Endothelial cell of umbilical vein (primary cell): ENCODE measurements at regions of chr14 and their contacts with region 1.

Region 1: GRCh38 chr14:77320238-77320935 is at the start of gene POMT2:
- DNase-seq: peak; percentile 94
- H3K4me3 ChIP-seq: peak within 1 kb of the TSS; percentile 66 to 93 (median 76)
- H3K27ac ChIP-seq: peak within 1 kb of the TSS; percentile 94
- H3K4me1 ChIP-seq: peaks cover 17% of the 10 kb centered on the region
- H3K27me3 ChIP-seq: no peaks in the 10 kb centered on the region
- CTCF ChIP-seq: peak; percentile 33 to 44
- POLR2A ChIP-seq: no peak
- total RNA-seq, gene POMT2: 43.2 and 48.2 TPM in 2 replicates

Region 2: DNA sequence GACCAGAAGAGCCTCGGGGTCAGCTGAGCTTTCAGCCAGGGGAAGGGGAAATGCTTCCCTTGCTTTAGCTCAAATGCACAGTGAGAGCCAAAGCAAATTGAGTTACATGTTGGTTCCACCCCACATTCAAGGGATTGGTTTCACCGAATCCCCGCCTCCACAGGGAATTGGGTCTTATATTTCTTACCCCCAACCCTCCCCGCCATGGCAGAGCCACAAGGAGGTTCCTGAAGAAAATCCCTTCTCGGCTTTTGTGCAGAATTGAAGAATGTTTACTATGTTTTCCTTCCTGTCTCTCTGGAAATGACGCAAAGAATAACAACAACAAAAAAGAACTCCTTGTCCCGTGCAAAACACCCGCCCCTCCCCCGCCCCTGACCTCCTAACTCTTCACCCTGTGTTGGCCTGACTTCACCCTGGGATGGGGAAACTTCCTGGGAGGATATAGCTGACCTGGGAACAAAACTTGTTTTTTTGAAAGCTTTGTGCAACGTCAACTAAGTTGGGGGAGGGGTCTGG is 244.2 kb before region 1 on chr14:
- CTCF ChIA-PET with region 1: no interaction called
- POLR2A ChIA-PET with region 1: no interaction called
- dilution Hi-C with region 1: no loop called
- intact Hi-C with region 1: no loop called
- DNase-seq: peak; percentile 89
- H3K4me3 ChIP-seq: no peak overlapping the region
- H3K27ac ChIP-seq: peak overlapping the region; percentile 86
- H3K4me1 ChIP-seq: peaks cover 14% of the 10 kb centered on the region
- H3K27me3 ChIP-seq: no peaks in the 10 kb centered on the region
- CTCF ChIP-seq: no peak
- POLR2A ChIP-seq: no peak

Region 3: DNA sequence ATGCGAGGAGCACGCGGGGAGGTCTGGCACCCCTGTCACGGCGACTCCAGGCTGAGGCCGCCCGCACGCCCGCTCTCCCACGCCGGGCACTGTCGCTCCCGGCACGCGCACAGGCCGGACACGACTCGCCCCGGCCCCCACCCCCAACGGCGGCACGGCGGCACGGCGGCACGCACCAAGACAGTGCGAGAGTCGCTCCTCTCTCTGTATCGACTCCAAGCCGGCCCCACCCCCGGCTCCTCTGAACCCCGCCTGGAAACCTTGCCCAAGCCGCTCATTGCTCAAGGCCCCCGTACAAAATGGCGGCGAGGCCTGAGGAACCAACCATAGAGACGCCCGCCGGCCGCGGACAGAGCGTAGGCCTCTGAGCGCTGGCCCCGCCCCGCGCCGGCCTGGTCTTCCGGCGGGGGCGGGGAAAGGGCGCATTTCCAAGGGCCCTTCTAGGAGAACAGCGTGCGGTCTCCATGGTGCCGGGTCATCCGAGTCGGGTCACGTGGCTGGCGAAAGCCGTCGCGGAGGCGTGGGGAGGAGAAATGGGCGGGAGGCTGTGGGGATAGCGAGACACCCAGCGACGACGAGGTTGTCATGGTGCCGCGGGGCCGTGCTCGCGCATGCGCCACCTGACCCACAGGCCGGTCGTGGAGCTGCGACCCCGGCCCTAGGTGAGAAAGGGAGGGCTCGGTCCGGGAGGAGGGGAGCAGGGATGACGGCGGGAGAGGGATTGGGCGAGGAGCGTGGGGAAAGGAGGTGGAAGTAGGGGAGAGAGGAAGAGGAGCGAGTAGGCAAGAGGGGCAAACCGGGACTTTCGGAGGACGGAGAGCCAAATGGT is 222.5 kb before region 1 on chr14 and contains the start of gene CIPC:
- CTCF ChIA-PET with region 1: interaction called, 5 read pairs
- POLR2A ChIA-PET with region 1: no interaction called
- dilution Hi-C with region 1: no loop called
- intact Hi-C with region 1: loop called (anchors 1 kb)
- DNase-seq: peak; percentile 99
- H3K4me3 ChIP-seq: peak within 1 kb of the TSS; percentile 30 to 72 (median 66)
- H3K27ac ChIP-seq: peak within 1 kb of the TSS; percentile 57
- H3K4me1 ChIP-seq: peaks cover 27% of the 10 kb centered on the region
- H3K27me3 ChIP-seq: no peaks in the 10 kb centered on the region
- CTCF ChIP-seq: no peak
- POLR2A ChIP-seq: no peak
- total RNA-seq, gene CIPC: 17.4 and 17.7 TPM in 2 replicates

Region 4: DNA sequence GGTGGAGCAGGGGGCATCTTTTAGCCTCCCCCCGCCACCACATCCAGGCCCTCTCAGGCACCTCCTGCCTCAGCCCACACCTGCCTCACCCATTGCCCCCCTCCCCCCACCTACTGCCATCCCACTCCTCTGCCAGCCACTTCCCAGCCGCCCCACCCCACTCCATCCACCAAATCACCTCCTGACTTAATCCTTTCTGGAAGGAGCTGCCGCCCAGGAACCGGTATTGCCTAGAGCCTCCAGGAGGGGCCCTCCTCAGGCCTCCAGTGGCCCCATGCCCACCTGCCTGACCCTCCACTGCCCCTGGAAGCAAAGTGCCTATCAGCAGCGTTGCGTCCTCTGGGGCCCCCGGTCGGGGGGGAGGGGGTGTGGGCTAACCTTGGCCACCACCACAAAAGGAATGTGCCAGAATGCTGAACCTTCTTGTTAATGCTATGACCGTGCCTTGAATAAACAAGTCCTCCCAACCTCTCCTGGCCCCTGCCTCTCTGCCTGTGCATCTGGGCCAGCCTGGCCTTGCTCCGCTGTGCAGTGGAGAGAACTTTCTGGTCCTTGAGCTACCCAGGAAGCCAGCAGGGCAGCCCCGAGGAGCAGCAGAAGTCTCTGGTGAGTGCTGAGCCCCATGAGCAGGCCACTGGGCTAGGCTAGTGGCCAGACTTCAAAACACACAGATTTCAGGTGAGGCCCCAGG is 61.2 kb before region 1 on chr14:
- CTCF ChIA-PET with region 1: no interaction called
- POLR2A ChIA-PET with region 1: no interaction called
- dilution Hi-C with region 1: no loop called
- intact Hi-C with region 1: no loop called
- DNase-seq: no peak
- H3K4me3 ChIP-seq: no peak overlapping the region
- H3K27ac ChIP-seq: no peak overlapping the region
- H3K4me1 ChIP-seq: no peaks in the 10 kb centered on the region
- H3K27me3 ChIP-seq: no peaks in the 10 kb centered on the region
- CTCF ChIP-seq: no peak
- POLR2A ChIP-seq: no peak

Region 5: GRCh38 chr14:77301103-77301502 is 19.3 kb before region 1 on chr14:
- CTCF ChIA-PET with region 1: interaction called, 515 read pairs
- POLR2A ChIA-PET with region 1: interaction called, 7 read pairs
- dilution Hi-C with region 1: no loop called
- intact Hi-C with region 1: loop called (anchors 1 kb)
- DNase-seq: peak; percentile 74
- H3K4me3 ChIP-seq: no peak overlapping the region
- H3K27ac ChIP-seq: no peak overlapping the region
- H3K4me1 ChIP-seq: peaks cover 29% of the 10 kb centered on the region
- H3K27me3 ChIP-seq: no peaks in the 10 kb centered on the region
- CTCF ChIP-seq: peak; percentile 85
- POLR2A ChIP-seq: no peak

Region 6: DNA sequence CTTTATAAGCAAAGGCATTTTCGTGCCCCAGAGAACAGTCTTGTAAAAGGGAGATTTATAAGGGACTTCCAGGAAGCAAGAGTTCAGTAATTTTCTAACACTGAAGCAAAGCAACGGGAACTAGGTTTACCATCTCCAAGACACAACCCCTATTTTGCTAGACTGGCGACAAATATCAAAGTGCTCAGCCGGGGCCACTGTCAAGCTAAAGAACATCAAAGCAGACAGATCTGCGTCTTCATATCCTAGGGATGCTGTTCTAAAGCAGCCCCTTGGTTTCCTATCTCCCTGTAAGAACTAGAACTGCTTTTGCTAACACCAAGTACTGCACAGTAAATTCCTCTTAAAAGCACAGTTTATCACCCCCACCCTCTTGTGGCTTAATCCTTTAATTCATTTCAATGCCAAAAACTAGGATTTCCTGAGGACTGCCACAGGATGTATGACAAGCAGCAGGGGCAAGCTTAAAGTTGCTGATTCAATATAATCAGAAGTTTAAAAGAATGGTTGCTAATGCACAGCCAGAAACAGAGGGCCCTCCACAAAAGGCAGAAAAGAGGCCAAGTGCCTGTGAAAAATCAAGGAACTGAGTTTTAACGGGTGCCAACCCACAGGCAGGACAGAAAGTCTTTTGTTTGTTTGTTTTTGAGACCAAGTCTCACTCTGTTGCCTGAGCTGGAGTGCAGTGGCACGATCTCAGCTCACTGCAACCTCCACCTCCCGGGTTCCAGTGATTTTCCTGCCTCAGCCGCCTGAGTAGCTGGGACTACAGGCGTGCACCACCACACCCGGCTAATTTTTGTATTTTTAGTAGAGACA is 222.2 kb after region 1 on chr14:
- CTCF ChIA-PET with region 1: interaction called, 3 read pairs
- POLR2A ChIA-PET with region 1: no interaction called
- dilution Hi-C with region 1: no loop called
- intact Hi-C with region 1: loop called (anchors 2 kb)
- DNase-seq: peak; percentile 91
- H3K4me3 ChIP-seq: peak overlapping the region in 1 of 3 experiments; percentile 47
- H3K27ac ChIP-seq: peak overlapping the region; percentile 79
- H3K4me1 ChIP-seq: peaks cover 34% of the 10 kb centered on the region
- H3K27me3 ChIP-seq: no peaks in the 10 kb centered on the region
- CTCF ChIP-seq: no peak
- POLR2A ChIP-seq: no peak

Region 7: DNA sequence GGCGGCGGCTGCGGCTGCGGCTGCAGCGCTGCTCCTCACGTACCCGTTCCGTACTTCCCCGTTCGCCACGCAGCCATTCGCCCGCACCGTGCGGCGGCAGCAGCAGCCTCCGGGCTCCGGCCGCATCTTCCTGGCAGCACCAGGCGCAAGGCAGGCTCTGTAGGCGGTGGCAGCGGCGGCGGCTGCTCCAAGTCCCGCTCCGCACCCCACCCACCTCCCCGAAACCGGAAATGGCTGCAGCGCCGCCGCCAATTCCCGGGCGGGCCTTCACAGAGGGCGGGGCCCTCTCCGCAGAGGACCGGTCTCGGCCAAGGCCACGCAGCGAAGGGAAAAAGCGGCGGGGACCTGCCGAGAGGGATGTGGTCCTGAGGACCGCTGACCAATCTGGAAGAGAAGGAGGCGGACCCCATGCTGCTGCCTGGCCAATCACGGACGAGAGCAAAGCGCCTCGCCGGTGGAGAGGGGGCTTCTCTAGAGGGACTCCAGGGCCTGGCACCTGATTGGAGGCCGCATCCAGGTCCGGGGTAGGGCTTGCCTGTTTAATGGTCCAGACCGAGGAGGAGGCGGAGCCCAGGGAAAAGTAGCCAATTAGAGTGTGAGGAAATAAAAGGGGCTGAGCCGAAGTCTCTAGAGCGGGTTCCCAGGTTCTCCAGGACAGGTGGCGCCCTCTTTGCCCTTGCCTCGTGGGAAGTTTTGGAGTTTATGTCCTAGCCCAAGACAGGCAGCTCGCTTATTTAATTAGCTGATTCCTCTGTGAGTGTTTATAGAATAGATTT is 296.3 kb after region 1 on chr14 and contains the start of gene SPTLC2:
- CTCF ChIA-PET with region 1: no interaction called
- POLR2A ChIA-PET with region 1: no interaction called
- dilution Hi-C with region 1: no loop called
- intact Hi-C with region 1: loop called (anchors 5 kb)
- DNase-seq: peak; percentile 100
- H3K4me3 ChIP-seq: peak within 1 kb of the TSS; percentile 86 to 94 (median 90)
- H3K27ac ChIP-seq: peak within 1 kb of the TSS; percentile 14
- H3K4me1 ChIP-seq: peaks cover 25% of the 10 kb centered on the region
- H3K27me3 ChIP-seq: peaks cover 0 to 4% of the 10 kb centered on the region in 2 experiments
- CTCF ChIP-seq: no peak
- POLR2A ChIP-seq: peak; percentile 76
- total RNA-seq, gene SPTLC2: 57.2 and 71.3 TPM in 2 replicates